AG04449 (cell line): ENCODE measurements at regions of chr13 and their contacts with region 1.

Region 1: GRCh38 chr13:95494082-95494681 is 58.3 kb upstream of the CLDN10 start:
- DNase-seq: no peak
- H3K4me3 ChIP-seq: no peak overlapping the region
- CTCF ChIP-seq: peak; percentile 59

Region 2: DNA sequence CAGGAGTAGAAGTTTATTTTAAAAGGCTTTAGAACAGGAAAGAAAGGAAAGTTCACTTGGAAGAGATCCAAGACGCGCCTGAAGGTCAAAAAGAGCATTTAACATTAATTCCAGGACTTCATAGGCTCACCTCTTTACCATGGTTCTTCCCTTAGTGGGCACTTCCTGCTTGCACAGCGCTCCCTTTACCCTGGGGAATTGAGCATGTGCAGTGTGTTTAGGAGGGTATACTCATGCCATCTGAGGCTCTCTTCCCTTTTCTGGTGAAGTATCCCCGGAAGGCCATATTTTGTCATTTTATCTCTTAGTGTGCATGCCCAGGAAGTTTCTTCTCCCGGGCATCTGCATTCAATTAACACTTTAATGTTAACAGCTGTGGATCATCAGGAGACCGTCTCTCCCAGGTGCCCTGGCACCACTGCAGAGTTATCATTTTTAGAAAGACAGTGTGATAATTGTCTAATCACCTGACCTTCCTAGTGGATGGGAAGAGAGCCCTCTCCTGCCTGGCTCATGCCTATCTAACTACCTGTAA is 126.8 kb before region 1 on chr13:
- CTCF ChIA-PET with region 1: no interaction called
- POLR2A ChIA-PET with region 1: no interaction called
- DNase-seq: no peak
- H3K4me3 ChIP-seq: no peak overlapping the region
- CTCF ChIP-seq: no peak

Region 3: GRCh38 chr13:95480131-95480545 is 14.0 kb before region 1 on chr13:
- CTCF ChIA-PET with region 1: interaction called, 23 read pairs
- POLR2A ChIA-PET with region 1: no interaction called
- DNase-seq: no peak
- H3K4me3 ChIP-seq: no peak overlapping the region
- CTCF ChIP-seq: no peak

Region 4: GRCh38 chr13:95516021-95516420 is 21.8 kb after region 1 on chr13:
- CTCF ChIA-PET with region 1: no interaction called
- POLR2A ChIA-PET with region 1: no interaction called
- DNase-seq: no peak
- H3K4me3 ChIP-seq: no peak overlapping the region
- CTCF ChIP-seq: no peak